HCT116 (cell line): ENCODE measurements at regions of chr4 and their contacts with region 1.

Region 1: GRCh38 chr4:106369456-106370060 is 980 bp upstream of the GIMD1 start:
- DNase-seq: peak; percentile 79
- ATAC-seq: peak; percentile 93
- H3K4me3 ChIP-seq: no peak overlapping the region
- H3K27ac ChIP-seq: no peak overlapping the region
- H3K4me1 ChIP-seq: peaks cover 0 to 11% of the 10 kb centered on the region in 2 experiments; a peak in 2 of 4 replicates
- H3K27me3 ChIP-seq: no peaks in the 10 kb centered on the region
- CTCF ChIP-seq: peak; percentile 66 to 80 (median 77)
- POLR2A ChIP-seq: no peak
- RAD21 ChIP-seq: peak; percentile 86

Region 2: DNA sequence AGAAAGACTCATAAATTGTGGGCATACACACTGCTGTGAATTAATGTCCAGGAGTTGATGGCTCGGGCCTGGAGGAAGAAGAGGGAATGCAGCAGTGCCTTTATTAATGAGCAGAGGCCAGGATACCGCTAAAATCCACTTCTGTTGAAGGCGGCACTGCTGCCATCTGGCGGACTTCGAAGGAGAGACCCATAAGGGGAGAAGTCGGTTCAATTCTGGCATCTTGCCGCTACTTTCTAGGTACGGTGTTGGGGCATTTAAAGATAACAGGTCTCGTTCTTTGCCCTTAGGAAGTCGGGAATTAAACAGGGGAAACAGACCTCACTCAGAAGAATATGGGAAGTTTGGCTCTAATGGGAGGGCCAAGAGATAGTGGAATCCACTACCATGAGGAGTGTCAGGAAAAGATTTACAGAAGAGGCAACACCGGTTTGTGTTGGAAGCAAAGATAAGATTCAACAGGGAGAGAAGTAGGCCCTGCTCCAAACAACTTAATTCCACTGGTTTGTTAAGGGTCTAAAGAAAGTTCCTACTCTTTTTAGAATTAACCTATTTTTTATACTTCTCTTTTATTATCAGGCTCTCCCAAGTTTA is 132.6 kb after region 1 on chr4:
- CTCF ChIA-PET with region 1: interaction called, 4 read pairs
- POLR2A ChIA-PET with region 1: no interaction called
- RAD21 ChIA-PET with region 1: interaction called in 1 of 2 experiments, 3 read pairs
- intact Hi-C with region 1: loop called (anchors 1 kb)
- DNase-seq: peak; percentile 54
- ATAC-seq: peak; percentile 97
- H3K4me3 ChIP-seq: peak overlapping the region in 1 of 2 experiments; percentile 17; a peak in 1 of 4 replicates
- H3K27ac ChIP-seq: no peak overlapping the region
- H3K4me1 ChIP-seq: peaks cover 0 to 2% of the 10 kb centered on the region in 2 experiments; a peak in 1 of 4 replicates
- H3K27me3 ChIP-seq: no peaks in the 10 kb centered on the region
- CTCF ChIP-seq: peak; percentile 74 to 83 (median 81)
- POLR2A ChIP-seq: no peak
- RAD21 ChIP-seq: peak; percentile 83

Region 3: DNA sequence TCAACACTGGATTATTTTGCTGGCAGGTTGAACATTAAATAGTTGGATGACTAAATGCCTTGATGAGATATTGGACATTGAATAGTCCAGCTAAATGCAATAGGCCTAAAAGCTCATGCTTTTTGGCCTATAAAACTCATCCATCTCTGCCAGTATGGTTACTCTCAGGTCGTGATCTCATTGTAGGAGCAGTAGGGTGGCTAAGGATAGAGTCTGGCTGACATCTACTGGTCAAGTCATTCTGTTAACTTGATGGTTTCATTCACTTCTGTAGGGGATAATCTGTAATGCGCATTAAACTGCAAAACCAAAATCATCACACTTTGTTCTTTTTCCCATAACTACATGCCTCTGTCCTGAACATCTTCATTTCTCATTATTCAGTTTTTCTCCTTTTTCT is 439.5 kb after region 1 on chr4:
- CTCF ChIA-PET with region 1: interaction called, 14 read pairs
- POLR2A ChIA-PET with region 1: no interaction called
- RAD21 ChIA-PET with region 1: no interaction called
- intact Hi-C with region 1: loop called (anchors 1 kb)
- DNase-seq: peak; percentile 26
- ATAC-seq: peak; percentile 81
- H3K4me3 ChIP-seq: no peak overlapping the region
- H3K27ac ChIP-seq: no peak overlapping the region
- H3K4me1 ChIP-seq: no peaks in the 10 kb centered on the region
- H3K27me3 ChIP-seq: no peaks in the 10 kb centered on the region
- CTCF ChIP-seq: peak; percentile 18 to 41 (median 36); a peak in 3 of 6 replicates
- POLR2A ChIP-seq: no peak
- RAD21 ChIP-seq: peak; percentile 75

Region 4: GRCh38 chr4:106898621-106899230 is 529.2 kb after region 1 on chr4:
- CTCF ChIA-PET with region 1: interaction called, 15 read pairs
- POLR2A ChIA-PET with region 1: no interaction called
- RAD21 ChIA-PET with region 1: no interaction called
- intact Hi-C with region 1: loop called (anchors 1 kb)
- DNase-seq: peak; percentile 51
- ATAC-seq: peak; percentile 93
- H3K4me3 ChIP-seq: no peak overlapping the region
- H3K27ac ChIP-seq: no peak overlapping the region
- H3K4me1 ChIP-seq: no peaks in the 10 kb centered on the region
- H3K27me3 ChIP-seq: no peaks in the 10 kb centered on the region
- CTCF ChIP-seq: peak; percentile 51 to 89 (median 74)
- POLR2A ChIP-seq: no peak
- RAD21 ChIP-seq: peak; percentile 72